Activated CD8-positive, alpha-beta T cell treated with anti-CD3 and anti-CD28 coated beads, Interleukin-2, amount 10 ng/mL, durations not matched to agents 7 days and 5 days (primary cell): ENCODE measurements at regions of chr1 and their contacts with region 1.

Region 1: DNA sequence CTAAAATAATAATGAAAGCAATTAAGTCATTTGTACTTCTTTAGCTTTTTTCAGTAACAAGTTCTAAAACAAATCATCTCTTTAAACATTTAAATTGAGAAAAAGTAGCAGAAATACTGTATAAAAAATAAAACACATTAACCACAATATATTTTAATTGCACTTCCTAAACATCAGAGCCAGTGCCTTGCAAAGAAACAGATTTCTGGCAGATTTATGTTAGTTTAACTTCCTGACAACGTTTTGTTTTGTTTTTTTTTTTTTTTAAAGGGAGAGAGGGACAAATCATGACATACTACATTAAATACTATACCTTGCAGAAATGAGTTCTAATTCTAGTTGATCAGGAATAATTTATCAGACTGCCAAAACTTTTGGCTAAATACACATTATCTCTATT is 11.2 kb downstream of the TMEM59 start:
- DNase-seq: no peak
- ATAC-seq: no peak
- H3K4me3 Mint-ChIP-seq: no peak overlapping the region
- H3K27ac Mint-ChIP-seq: no peak overlapping the region
- H3K4me1 Mint-ChIP-seq: no peaks in the 10 kb centered on the region
- H3K27me3 Mint-ChIP-seq: no peaks in the 10 kb centered on the region

Region 2: GRCh38 chr1:53847980-53848379 is 193.8 kb before region 1 on chr1:
- CTCF ChIA-PET with region 1: no interaction called
- POLR2A ChIA-PET with region 1: no interaction called
- DNase-seq: no peak
- ATAC-seq: no peak
- H3K4me3 Mint-ChIP-seq: no peak overlapping the region
- H3K27ac Mint-ChIP-seq: no peak overlapping the region
- H3K4me1 Mint-ChIP-seq: no peaks in the 10 kb centered on the region
- H3K27me3 Mint-ChIP-seq: peaks cover 2% of the 10 kb centered on the region

Region 3: DNA sequence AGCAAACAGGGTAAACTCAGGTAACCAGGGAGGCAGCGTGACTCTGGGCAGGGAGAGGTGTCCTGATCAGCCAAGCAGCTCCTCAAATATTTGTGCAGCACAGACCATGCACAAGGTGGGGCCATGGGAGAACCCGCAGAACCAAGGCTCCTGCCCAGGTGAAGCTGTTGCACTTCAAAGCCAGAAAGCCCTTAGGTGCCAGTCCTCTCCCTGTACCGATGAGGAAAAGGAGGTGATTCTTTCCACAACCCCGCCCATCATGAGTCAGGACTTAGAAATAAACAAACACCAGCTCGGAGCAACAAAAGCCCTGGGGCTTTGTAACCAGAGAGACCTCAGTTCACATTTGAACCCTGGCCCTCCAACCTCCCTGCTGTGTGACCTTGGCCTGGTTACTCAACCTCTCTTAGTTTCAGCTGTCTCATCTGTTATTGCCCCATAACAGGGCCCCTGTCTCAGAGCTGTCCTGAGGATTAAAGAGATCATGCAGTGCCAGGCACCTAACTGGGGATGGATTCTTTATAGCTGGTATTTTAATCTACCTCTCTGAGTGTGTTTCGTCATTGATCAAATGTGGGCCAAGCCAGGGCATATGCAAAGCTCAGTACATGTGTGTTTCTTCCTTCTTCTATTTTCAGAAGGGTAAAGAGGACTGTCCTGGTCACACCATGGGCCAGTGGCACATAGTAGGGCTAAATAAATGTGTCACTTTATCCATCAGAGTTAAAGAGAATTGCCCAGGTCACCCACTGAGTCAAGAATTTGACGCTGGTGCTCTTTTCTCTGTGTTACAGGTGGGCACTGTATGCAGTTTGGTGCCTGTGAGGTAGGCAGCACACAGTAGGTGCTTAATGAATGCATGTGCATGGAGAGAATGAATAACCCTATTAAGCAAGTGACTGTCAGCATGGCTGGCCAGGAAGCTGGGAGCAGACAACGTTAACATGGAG is 25.2 kb before region 1 on chr1:
- CTCF ChIA-PET with region 1: no interaction called
- POLR2A ChIA-PET with region 1: no interaction called
- DNase-seq: no peak
- ATAC-seq: no peak
- H3K4me3 Mint-ChIP-seq: no peak overlapping the region
- H3K27ac Mint-ChIP-seq: no peak overlapping the region
- H3K4me1 Mint-ChIP-seq: no peaks in the 10 kb centered on the region
- H3K27me3 Mint-ChIP-seq: peaks cover 2% of the 10 kb centered on the region

Region 4: DNA sequence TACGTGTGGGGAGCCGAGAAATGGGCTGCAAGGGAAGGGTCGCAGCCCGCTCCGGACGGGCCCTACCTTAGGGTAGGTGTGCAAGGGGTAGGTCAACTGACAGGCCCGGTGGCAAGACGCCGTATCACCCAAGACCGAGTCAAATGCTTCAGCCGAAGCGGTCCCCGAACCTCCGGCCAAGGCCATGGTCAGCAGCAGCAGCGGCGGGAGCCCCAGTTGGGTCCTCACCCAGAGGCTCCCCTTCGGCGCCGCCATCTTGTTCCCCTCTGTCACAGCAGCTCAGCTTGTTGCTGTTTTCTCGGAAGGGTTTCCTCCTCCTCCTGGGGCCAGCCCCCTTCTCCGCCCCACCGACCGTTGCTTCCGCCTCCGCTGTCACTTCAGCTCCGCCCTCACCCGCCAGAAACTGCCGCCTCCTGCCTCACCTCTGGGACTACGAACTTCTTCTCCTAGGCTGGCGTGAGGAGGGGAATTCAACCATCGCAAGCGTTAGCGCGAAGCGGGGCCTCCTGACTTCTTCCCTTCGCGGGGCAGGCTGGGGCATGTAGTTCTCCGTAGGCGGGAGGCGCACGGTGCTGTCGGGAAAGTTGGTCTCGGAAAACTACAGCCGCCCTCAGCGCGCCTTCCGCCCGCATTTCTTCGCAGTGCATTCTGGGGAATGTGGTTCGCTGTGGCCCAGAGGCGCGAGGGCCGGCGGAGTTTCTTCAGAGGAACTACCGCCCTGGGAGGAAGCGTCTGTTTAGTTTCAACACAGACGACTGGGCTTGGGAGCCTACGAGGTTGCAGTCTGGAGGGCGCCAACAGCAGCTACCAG is 11.3 kb after region 1 on chr1 and contains the starts of genes TCEANC2 and TMEM59:
- CTCF ChIA-PET with region 1: interaction called, 3 read pairs
- POLR2A ChIA-PET with region 1: interaction called, 14 read pairs
- DNase-seq: peak; percentile 99
- ATAC-seq: peak; percentile 96
- H3K4me3 Mint-ChIP-seq: no peak within 1 kb of the TSS
- H3K27ac Mint-ChIP-seq: no peak within 1 kb of the TSS
- H3K4me1 Mint-ChIP-seq: peaks cover 29% of the 10 kb centered on the region
- H3K27me3 Mint-ChIP-seq: no peaks in the 10 kb centered on the region
- total RNA-seq, gene TCEANC2: 11.6 to 12.0 TPM
- total RNA-seq, gene TMEM59: 154 to 156 TPM